MCF 10A (cell line): ENCODE measurements at regions of chr14 and their contacts with region 1.

Region 1: GRCh38 chr14:99035712-99036610 is 236.0 kb downstream of the BCL11B start:
- DNase-seq: peak; percentile 96
- H3K4me3 Mint-ChIP-seq: peak overlapping the region; percentile 25
- H3K27ac Mint-ChIP-seq: peak overlapping the region; percentile 79
- H3K4me1 Mint-ChIP-seq: peaks cover 17% of the 10 kb centered on the region
- H3K27me3 Mint-ChIP-seq: no peaks in the 10 kb centered on the region
- CTCF ChIP-seq: no peak

Region 2: DNA sequence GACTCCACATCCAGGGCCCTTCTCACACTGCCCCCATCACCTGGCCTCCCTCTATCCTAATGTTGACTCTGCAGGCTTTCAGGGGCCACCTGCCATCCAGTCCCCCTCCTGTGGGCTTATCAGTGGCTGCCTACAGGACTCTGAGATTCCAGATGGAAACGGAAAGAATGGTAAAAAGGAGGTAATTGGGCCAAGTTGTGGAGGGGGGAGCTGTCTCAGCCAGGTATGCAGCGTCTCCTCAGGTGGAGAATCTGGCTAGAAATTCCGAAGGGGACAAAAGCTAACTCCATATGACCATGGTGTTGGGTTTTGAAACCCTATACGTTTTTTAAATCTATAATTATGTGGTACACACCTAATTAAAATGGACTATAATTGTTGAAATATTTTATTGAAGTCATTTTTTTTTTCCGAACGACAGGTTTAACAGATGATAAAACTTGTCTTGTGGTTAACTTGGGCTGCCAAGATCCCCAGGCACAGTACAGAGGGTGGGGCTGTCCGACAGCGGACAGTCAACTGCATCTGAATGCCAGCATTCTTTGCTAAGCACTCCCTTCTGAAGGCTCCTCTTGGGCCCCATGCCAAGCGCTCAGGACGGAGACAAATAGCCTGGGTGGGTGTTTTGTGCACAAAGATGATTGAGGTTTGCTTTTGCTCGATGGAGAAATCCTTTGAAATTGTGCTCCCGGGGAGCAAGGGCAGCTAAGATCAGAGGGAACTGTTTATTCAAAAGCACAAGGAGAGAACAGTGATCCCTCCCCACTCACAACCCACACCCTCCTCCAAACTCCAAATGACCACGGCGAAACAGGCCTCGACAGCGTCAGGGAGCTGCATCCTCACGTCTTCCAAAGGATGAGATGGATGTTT is 129.6 kb before region 1 on chr14:
- CTCF ChIA-PET with region 1: interaction called, 3 read pairs
- POLR2A ChIA-PET with region 1: interaction called, 6 read pairs
- intact Hi-C with region 1: loop called (anchors 1 kb)
- DNase-seq: peak; percentile 96
- H3K4me3 Mint-ChIP-seq: peak overlapping the region; percentile 28
- H3K27ac Mint-ChIP-seq: peak overlapping the region; percentile 80
- H3K4me1 Mint-ChIP-seq: peaks cover 52% of the 10 kb centered on the region
- H3K27me3 Mint-ChIP-seq: no peaks in the 10 kb centered on the region
- CTCF ChIP-seq: no peak

Region 3: DNA sequence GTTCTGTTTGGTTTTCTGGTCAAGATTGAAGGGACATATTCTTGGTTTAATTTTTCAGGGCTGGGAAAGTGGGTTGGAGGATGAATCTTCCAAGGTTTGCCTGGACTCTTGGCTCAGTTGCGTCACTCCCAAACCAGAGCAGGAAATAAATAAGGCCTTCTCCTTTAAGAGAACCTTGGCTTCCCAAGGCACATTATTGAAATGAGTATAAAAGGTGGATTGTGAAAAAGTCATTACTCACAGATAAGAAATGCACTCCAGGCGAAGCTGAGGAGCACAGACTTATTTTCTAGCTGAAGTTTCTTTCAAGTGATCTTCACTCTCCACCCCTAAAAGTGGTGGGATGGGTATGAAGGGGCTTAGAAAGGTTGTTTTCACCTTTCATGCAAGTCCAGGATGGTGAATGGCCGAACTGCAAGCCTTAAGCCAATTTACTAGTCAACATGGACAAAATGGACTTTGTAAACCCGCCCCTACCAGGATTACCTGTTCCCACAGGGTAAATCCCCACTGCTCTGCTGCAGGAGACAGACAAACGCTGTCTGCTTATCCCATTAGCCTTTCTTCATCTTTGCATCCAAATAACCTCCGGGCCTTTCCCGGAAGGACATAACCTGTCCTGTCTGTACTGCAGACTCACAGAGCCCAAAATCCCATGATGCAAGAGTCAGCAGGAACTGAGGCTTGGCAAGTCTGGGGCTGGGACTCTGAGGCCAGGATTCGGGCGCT is 28.4 kb after region 1 on chr14:
- CTCF ChIA-PET with region 1: no interaction called
- POLR2A ChIA-PET with region 1: interaction called, 13 read pairs
- intact Hi-C with region 1: no loop called
- DNase-seq: peak; percentile 78
- H3K4me3 Mint-ChIP-seq: peak overlapping the region; percentile 15
- H3K27ac Mint-ChIP-seq: peak overlapping the region; percentile 65
- H3K4me1 Mint-ChIP-seq: peaks cover 17% of the 10 kb centered on the region
- H3K27me3 Mint-ChIP-seq: no peaks in the 10 kb centered on the region
- CTCF ChIP-seq: no peak

Region 4: DNA sequence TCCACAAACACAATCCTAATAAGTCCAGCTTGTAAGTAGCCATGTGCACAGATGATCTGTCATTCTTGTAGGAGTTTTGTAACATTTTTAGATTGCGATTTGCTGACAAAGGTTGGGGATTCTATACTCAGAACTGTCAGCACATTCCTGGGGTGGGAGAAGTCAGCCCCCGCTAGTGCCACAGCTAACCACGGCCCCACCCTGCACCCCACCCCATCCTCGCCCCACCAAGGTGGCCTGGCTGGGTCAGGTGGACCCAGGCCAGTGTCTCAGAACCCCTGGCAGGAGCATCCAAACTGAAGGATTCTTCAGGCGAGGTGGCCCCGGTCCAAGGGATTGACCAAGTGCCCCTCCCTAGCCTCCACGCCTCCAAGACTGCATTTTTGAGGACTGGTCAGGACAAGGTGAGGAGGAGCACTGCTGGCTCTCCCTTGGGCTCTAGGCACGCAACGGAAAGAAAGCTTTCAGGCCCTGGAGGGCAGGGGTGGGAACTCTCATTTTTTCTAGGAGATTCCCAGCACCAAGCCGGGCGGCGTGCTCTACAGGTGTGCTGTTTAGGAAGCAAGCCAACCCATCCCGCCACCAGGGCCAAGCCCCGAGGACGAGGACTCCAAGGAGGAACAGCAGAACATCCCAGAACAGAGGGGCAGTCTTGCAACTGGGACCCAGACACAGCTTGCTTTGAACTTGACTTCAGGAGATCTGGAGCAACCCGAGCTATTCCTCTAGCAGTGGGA is 63.3 kb after region 1 on chr14:
- CTCF ChIA-PET with region 1: no interaction called
- POLR2A ChIA-PET with region 1: interaction called, 13 read pairs
- intact Hi-C with region 1: no loop called
- DNase-seq: peak; percentile 82
- H3K4me3 Mint-ChIP-seq: peak overlapping the region; percentile 9
- H3K27ac Mint-ChIP-seq: peak overlapping the region; percentile 65
- H3K4me1 Mint-ChIP-seq: peaks cover 19% of the 10 kb centered on the region
- H3K27me3 Mint-ChIP-seq: no peaks in the 10 kb centered on the region
- CTCF ChIP-seq: no peak